Sciatic nerve (tissue), 2 donors: ENCODE measurements at regions of chr3 and their contacts with region 1.

Region 1: GRCh38 chr3:27423463-27423862 is 54.3 kb upstream of the NEK10 start:
- DNase-seq: no peak
- ATAC-seq: no peak

Region 2: DNA sequence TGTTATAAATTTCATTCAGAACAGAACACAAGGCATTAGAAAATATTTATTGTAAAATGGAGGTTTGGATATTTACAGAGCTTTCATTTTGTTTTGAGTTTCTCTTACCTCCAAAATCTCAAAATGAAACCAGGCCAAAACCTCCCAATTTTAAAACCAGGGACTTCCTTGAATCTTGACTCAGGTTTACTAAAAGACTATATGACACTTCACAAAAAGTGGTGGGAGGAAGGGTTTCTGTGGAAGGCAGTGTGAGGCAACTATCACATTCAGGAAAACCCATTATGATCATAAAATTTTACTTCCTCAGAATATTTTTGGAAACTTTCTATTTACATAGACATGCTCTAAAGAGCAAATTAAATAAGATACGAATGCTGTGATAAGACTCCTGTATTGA is 504.4 kb after region 1 on chr3:
- intact Hi-C with region 1: loop called (anchors 5 kb)
- DNase-seq: no peak
- ATAC-seq: no peak